Activated CD4-positive, alpha-beta memory T cell treated with anti-CD3 and anti-CD28 coated beads, Interleukin-2, amount 10 ng/mL, durations not matched to agents 7 days and 5 days (primary cell): ENCODE measurements at regions of chr4 and their contacts with region 1.

Region 1: GRCh38 chr4:17544205-17544604 is 29.2 kb downstream of the CLRN2 start:
- DNase-seq: no peak
- H3K4me3 Mint-ChIP-seq: no peak overlapping the region
- H3K27ac Mint-ChIP-seq: no peak overlapping the region
- H3K4me1 Mint-ChIP-seq: peaks cover 4% of the 10 kb centered on the region
- H3K27me3 Mint-ChIP-seq: peaks cover 26% of the 10 kb centered on the region

Region 2: GRCh38 chr4:17523662-17524061 is 20.5 kb before region 1 on chr4:
- CTCF ChIA-PET with region 1: no interaction called
- POLR2A ChIA-PET with region 1: no interaction called
- DNase-seq: no peak
- H3K4me3 Mint-ChIP-seq: no peak overlapping the region
- H3K27ac Mint-ChIP-seq: no peak overlapping the region
- H3K4me1 Mint-ChIP-seq: no peaks in the 10 kb centered on the region
- H3K27me3 Mint-ChIP-seq: peaks cover 34% of the 10 kb centered on the region

Region 3: DNA sequence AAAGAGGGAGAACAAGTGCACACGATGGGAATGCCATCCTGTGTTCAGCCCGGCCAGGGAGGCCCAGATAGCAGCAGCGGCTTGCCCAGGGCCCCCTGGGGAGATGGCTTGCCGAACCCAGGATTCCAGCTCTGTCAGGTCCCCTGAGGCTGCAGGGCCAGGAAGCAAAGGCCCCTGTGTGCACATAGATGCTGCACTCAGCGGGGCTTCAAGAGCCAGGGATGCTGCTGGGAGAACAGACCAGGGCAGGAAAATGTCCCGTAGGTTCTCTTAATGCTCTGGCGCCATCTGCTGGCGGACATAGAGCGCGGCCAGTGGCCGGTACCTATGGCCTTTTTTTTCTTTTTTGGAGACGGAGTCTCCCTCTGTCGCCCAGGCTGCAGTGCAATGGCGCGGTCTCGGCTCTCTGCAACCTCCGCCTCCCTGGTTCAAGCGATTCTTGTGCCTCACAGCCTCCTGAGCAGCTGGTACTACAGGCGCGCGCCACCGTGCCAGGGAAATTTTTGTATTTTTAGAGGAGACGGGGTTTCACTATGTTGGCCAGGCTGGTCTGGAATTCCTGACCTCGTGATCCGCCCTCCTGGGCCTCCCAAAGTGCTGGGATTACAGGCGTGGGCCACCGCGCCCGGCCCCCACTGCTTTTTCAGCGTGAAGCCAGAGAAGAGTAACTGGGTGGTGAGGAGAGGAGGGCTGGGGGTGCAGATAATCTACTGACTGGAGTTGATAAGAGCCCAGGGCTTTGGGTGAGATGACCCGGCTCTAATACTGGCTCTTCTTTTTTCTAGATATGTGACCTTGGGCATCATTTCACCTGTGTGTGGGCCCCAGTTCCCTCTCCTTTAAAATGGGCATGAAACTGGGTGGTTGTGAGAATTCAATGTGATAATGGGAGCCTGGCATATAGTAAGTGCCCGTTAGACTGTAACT is 92.8 kb after region 1 on chr4:
- CTCF ChIA-PET with region 1: interaction called, 35 read pairs
- POLR2A ChIA-PET with region 1: interaction called, 6 read pairs
- DNase-seq: peak; percentile 75
- H3K4me3 Mint-ChIP-seq: no peak overlapping the region
- H3K27ac Mint-ChIP-seq: no peak overlapping the region
- H3K4me1 Mint-ChIP-seq: no peaks in the 10 kb centered on the region
- H3K27me3 Mint-ChIP-seq: no peaks in the 10 kb centered on the region